ENCODE measurements at regions of chr10 and their contacts with region 1.

Region 1: GRCh38 chr10:101536800-101537199 is 51.3 kb downstream of the POLL start:
- DNase-seq: peak; percentile 27
- ATAC-seq: no peak
- H3K4me3 ChIP-seq: no peak overlapping the region
- H3K27ac ChIP-seq: no peak overlapping the region
- H3K4me1 ChIP-seq: no peaks in the 10 kb centered on the region
- H3K27me3 ChIP-seq: no peaks in the 10 kb centered on the region
- CTCF ChIP-seq: peak; percentile 47
- POLR2A ChIP-seq: no peak
- RAD21 ChIP-seq: no peak; the same call in 1 of the 2 replicates

Region 2: GRCh38 chr10:101468159-101468558 is 68.6 kb before region 1 on chr10:
- CTCF ChIA-PET with region 1: no interaction called
- POLR2A ChIA-PET with region 1: no interaction called
- dilution Hi-C with region 1: no loop called
- in situ Hi-C with region 1: no loop called
- intact Hi-C with region 1: no loop called
- DNase-seq: no peak
- ATAC-seq: no peak
- H3K4me3 ChIP-seq: no peak overlapping the region
- H3K27ac ChIP-seq: no peak overlapping the region
- H3K4me1 ChIP-seq: peaks cover 2% of the 10 kb centered on the region; the same call in 1 of the 2 replicates
- H3K27me3 ChIP-seq: no peaks in the 10 kb centered on the region
- CTCF ChIP-seq: no peak
- POLR2A ChIP-seq: no peak
- RAD21 ChIP-seq: no peak

Region 3: GRCh38 chr10:101493782-101494281 is 43.0 kb before region 1 on chr10:
- CTCF ChIA-PET with region 1: no interaction called
- POLR2A ChIA-PET with region 1: no interaction called
- dilution Hi-C with region 1: no loop called
- in situ Hi-C with region 1: no loop called
- intact Hi-C with region 1: loop called (anchors 5 kb)
- DNase-seq: no peak
- ATAC-seq: no peak
- H3K4me3 ChIP-seq: no peak overlapping the region
- H3K27ac ChIP-seq: no peak overlapping the region
- H3K4me1 ChIP-seq: no peaks in the 10 kb centered on the region
- H3K27me3 ChIP-seq: no peaks in the 10 kb centered on the region
- CTCF ChIP-seq: no peak
- POLR2A ChIP-seq: no peak
- RAD21 ChIP-seq: no peak

Measured in IMR-90 (cell line).